ENCODE measurements at regions of chr3 and their contacts with region 1.

Region 1: DNA sequence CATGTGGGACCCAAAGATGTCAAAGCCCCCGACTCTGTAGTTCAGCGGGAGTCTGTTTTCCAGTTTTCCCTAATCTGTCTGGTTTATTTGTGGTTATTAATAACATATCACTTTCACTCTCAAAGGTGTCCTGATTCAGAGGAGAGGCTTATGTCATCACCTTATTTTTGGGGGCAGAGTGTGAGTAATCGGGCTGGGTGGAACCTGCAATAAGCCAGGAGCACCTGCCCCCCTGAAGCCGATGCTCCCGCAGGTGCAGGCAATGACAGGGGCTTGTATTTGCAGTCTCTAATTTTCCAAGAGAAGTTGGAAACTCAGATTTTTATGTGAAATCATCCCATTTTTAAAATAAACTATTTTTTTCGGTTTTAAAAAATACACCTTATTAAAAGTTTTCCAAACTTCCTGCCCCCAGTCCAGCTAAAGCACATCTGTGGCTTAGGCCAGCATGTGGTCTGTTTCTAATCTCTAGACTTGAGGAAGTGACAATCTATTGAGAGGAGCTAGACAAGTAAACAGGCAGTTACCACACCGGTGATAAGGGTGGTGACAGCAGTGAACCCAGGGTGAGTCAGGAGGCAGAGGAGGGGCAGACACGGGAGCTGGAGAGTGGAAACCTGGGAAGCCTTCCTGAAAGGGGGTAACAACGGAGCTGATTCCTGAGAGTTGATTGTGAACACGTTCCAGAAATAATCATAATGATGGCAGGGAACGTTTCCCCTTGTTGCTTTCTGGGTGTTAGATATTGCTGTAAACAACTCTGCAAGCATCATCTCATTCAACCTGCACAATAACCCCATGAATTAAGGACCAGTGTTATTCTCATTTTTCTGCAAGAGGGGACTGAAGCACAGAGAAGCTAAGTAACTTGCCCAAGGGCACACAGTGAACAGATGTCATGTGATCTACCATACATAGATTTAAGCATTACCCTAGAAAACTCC is 37.3 kb downstream of the BHLHE40 start:
- DNase-seq: peak; percentile 66 to 84 (median 79)
- H3K4me3 ChIP-seq: no peak overlapping the region
- H3K4me3 Mint-ChIP-seq: peak overlapping the region in 1 of 2 donors; percentile 54
- H3K27ac ChIP-seq: peak overlapping the region; percentile 10 to 70
- H3K27ac Mint-ChIP-seq: peak overlapping the region; percentile 9 to 95 (median 87)
- H3K4me1 ChIP-seq: peaks cover 73 to 83% of the 10 kb centered on the region in 2 donors
- H3K4me1 Mint-ChIP-seq: peaks cover 90% of the 10 kb centered on the region
- H3K27me3 ChIP-seq: no peaks in the 10 kb centered on the region
- H3K27me3 Mint-ChIP-seq: peaks cover 0 to 2% (median 0%) of the 10 kb centered on the region in 3 donors
- CTCF ChIP-seq: no peak

Region 2: GRCh38 chr3:4963669-4964589 is 52.6 kb before region 1 on chr3:
- intact Hi-C with region 1: no loop called
- DNase-seq: no peak
- H3K4me3 ChIP-seq: no peak overlapping the region
- H3K4me3 Mint-ChIP-seq: peak overlapping the region in 1 of 2 donors; percentile 23
- H3K27ac ChIP-seq: no peak overlapping the region
- H3K27ac Mint-ChIP-seq: peak overlapping the region in 1 of 7 donors; percentile 41
- H3K4me1 ChIP-seq: no peaks in the 10 kb centered on the region
- H3K4me1 Mint-ChIP-seq: peaks cover 9% of the 10 kb centered on the region
- H3K27me3 ChIP-seq: peaks cover 0 to 2% of the 10 kb centered on the region in 2 donors
- H3K27me3 Mint-ChIP-seq: peaks cover 0 to 2% (median 0%) of the 10 kb centered on the region in 3 donors
- CTCF ChIP-seq: no peak

Region 3: DNA sequence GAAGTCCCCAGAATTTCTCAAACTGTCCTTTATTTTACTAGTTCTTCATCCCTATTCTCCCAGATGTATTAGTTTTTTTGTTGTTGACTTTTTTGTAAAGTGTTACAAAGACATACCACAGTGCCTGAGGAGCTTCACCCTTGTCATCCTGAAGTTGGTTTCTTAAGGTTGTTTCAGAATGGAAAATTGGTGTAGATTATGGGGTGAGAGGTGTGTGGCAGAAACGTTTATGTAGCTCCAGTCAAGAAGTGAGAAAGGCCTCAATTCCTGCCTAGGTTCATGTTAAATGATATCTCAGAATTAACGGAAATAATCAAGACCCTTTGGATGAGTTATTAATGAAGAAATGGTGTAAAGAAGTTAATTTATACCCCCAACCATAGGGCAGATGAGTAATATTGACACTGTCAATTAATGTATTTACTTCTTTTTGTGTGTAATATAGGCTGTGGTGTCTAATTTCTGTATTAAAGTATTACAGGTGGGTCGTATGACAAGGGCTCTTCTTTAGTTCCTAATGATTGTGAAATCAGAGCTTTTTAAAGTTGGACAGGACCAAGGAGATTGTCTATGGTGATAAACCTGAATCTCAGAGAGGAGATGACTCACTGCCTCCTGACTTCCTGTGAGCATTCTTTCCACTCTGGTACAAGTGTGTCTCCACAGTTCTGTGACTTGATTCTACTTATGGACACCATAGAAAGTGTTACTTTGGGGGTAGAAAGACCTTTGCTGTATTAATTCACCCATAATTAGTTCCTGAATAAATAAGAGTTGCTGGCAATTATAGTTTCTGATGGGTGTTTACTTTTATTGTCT is 178.1 kb after region 1 on chr3:
- intact Hi-C with region 1: loop called in 1 of 2 experiments (anchors 10 kb)
- DNase-seq: peak; percentile 76 to 95 (median 94)
- H3K4me3 ChIP-seq: peak overlapping the region in 1 of 3 experiments; percentile 31
- H3K4me3 Mint-ChIP-seq: no peak overlapping the region
- H3K27ac ChIP-seq: peak overlapping the region in 1 of 2 donors; percentile 88
- H3K27ac Mint-ChIP-seq: peak overlapping the region; percentile 93 to 97 (median 95)
- H3K4me1 ChIP-seq: peaks cover 86 to 97% of the 10 kb centered on the region in 2 donors
- H3K4me1 Mint-ChIP-seq: peaks cover 88% of the 10 kb centered on the region
- H3K27me3 ChIP-seq: no peaks in the 10 kb centered on the region
- H3K27me3 Mint-ChIP-seq: no peaks in the 10 kb centered on the region
- CTCF ChIP-seq: no peak

Region 4: GRCh38 chr3:6631371-6631770 is 1614.9 kb after region 1 on chr3:
- intact Hi-C with region 1: no loop called
- DNase-seq: no peak
- H3K4me3 ChIP-seq: no peak overlapping the region
- H3K4me3 Mint-ChIP-seq: no peak overlapping the region
- H3K27ac ChIP-seq: no peak overlapping the region
- H3K27ac Mint-ChIP-seq: no peak overlapping the region
- H3K4me1 ChIP-seq: no peaks in the 10 kb centered on the region
- H3K4me1 Mint-ChIP-seq: no peaks in the 10 kb centered on the region
- H3K27me3 ChIP-seq: no peaks in the 10 kb centered on the region
- H3K27me3 Mint-ChIP-seq: peaks cover 0 to 1% (median 0%) of the 10 kb centered on the region in 3 donors
- CTCF ChIP-seq: no peak

Measured in CD14-positive monocyte (primary cell).